ENCODE measurements at regions of chr13 and their contacts with region 1.

Region 1: DNA sequence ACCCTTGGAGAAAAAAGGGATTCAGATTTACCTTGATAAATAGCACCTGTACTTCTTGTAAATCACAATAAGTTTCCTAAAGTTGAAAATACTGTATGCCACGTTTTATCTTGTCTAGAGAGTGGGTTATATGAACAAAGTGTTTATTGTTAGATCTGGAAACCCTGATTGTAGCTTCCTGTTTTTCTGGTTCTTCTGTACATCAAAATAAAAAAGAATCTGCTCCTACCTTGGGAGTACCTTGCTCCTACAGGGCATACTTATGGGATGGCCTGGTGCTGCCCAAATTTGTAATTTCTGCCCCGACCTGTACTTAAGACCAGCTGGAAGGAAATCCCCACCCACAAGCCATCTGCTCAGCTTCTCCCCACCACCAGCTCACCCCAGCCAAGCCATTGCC is 241.1 kb downstream of the SLC7A1 start:
- DNase-seq: no peak
- ATAC-seq: no peak

Region 2: GRCh38 chr13:29210676-29211075 is 143.7 kb before region 1 on chr13:
- intact Hi-C with region 1: loop called in 1 of 2 experiments (anchors 5 kb)
- DNase-seq: no peak
- ATAC-seq: no peak